Activated CD4-positive, alpha-beta memory T cell treated with anti-CD3 and anti-CD28 coated beads for 36 hours (primary cell): ENCODE measurements at regions of chr5 and their contacts with region 1.

Region 1: GRCh38 chr5:142012792-142013388 is at the start of gene GNPDA1:
- DNase-seq: peak; percentile 81
- H3K4me3 Mint-ChIP-seq: peak within 1 kb of the TSS; percentile 89
- H3K27ac Mint-ChIP-seq: peak within 1 kb of the TSS; percentile 98
- H3K4me1 Mint-ChIP-seq: peaks cover 69% of the 10 kb centered on the region
- H3K27me3 Mint-ChIP-seq: no peaks in the 10 kb centered on the region
- total RNA-seq, gene GNPDA1: 55.8 to 56.6 TPM

Region 2: GRCh38 chr5:141908796-141909195 is 104.1 kb before region 1 on chr5:
- CTCF ChIA-PET with region 1: no interaction called
- POLR2A ChIA-PET with region 1: no interaction called
- intact Hi-C with region 1: no loop called
- DNase-seq: no peak
- H3K4me3 Mint-ChIP-seq: no peak overlapping the region
- H3K27ac Mint-ChIP-seq: no peak overlapping the region
- H3K4me1 Mint-ChIP-seq: peaks cover 7% of the 10 kb centered on the region
- H3K27me3 Mint-ChIP-seq: peaks cover 10% of the 10 kb centered on the region

Region 3: DNA sequence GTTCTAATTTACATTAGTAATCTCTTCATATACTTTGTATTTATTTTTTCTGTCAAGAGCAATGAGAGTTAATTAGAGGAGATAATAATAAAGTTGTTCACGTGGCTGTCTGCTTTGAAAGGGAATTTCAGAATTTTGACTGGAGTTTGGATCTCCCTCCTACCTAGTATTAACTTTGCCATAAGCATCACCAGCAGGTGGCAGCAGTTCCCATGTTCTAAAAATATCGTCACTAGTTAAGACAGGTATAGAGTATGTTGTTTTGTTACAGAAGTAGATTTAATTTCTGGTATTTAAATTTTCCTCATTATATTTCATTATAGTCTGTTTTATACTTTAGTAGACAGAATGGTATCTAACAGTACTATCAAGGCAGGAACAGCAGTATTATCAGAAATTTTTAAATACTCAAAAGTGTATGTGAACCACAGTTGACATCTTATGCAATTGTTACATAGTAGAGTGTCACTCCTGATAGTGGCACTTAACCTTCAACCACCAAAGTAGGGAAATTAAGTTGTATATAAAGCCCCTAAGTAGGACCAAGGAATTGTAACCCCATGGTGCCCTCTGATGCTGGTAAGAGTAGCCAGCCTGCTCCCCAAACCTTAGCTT is 20.4 kb before region 1 on chr5:
- CTCF ChIA-PET with region 1: interaction called, 30 read pairs
- POLR2A ChIA-PET with region 1: no interaction called
- intact Hi-C with region 1: loop called (anchors 1 kb)
- DNase-seq: peak; percentile 84
- H3K4me3 Mint-ChIP-seq: no peak overlapping the region
- H3K27ac Mint-ChIP-seq: no peak overlapping the region
- H3K4me1 Mint-ChIP-seq: no peaks in the 10 kb centered on the region
- H3K27me3 Mint-ChIP-seq: no peaks in the 10 kb centered on the region

Region 4: DNA sequence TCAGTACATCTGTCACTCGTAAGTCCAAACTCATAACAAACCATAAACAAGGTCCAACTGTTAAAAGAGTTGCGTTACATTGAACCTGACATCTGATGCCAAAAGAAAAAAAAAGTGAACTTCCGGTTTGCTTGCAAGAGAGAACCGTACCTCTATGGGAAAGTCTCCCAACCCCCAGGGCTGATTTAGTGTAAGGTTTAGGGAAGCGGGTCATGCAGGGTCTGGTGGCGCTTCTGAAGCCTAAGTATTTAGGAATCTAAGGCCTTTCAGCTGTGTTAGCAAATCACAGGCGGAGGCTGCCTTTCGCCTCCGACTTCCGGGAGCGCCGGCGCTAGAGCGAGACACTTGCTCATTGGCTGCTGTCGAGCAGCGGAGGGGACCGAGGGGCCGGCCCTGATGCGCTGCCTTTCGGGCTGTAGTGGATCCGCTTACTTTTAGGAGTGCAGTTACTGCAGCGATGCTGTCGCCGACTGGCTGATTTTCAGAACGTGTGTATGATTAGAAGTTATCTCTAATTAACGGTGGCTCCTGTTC is 11.9 kb after region 1 on chr5:
- CTCF ChIA-PET with region 1: interaction called, 26 read pairs
- POLR2A ChIA-PET with region 1: interaction called, 10 read pairs
- intact Hi-C with region 1: loop called (anchors 1 kb)
- DNase-seq: peak; percentile 93
- H3K4me3 Mint-ChIP-seq: peak overlapping the region; percentile 88
- H3K27ac Mint-ChIP-seq: peak overlapping the region; percentile 99
- H3K4me1 Mint-ChIP-seq: peaks cover 17% of the 10 kb centered on the region
- H3K27me3 Mint-ChIP-seq: no peaks in the 10 kb centered on the region

Region 5: DNA sequence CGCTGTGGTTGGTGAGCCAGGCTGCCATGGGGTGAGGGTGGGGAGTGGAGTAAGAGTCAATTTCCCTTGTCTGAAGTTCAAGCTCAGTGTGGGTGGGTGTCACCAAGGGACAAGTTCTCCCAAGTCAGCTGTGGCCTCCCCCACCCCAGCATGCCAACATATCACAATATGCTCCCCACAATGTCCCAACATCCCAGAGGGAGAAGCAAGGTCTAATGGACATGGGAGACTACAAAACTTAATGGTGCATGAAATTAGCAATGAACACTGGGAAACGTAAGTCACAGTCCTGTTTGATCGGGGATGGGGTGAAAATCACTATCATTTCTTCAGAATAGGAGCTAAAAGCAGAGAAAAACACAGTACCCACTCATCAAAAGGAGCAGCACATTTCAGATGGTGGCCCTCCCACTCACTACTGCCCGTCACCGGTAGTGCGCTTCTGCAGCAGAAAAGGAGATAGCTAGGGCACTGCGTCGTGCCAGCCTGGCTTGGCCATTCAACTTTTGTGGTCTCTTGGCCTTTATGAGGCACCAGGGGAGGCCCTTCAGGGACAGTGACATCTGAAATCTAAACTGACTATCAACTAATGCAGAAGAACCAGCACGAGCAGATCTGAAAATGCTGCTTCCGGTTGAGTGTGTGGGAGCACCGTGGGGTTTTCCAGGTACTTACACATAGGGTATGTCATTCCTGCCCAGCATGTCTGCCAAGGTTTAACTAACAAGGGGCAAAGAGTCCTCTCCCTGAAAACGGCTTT is 75.2 kb after region 1 on chr5:
- CTCF ChIA-PET with region 1: interaction called, 45 read pairs
- POLR2A ChIA-PET with region 1: interaction called, 50 read pairs
- intact Hi-C with region 1: loop called (anchors 1 kb)
- DNase-seq: peak; percentile 88
- H3K4me3 Mint-ChIP-seq: peak overlapping the region; percentile 61
- H3K27ac Mint-ChIP-seq: peak overlapping the region; percentile 95
- H3K4me1 Mint-ChIP-seq: peaks cover 61% of the 10 kb centered on the region
- H3K27me3 Mint-ChIP-seq: no peaks in the 10 kb centered on the region

Region 6: GRCh38 chr5:142108432-142109330 is 95.8 kb after region 1 on chr5 and contains the start of gene NDFIP1:
- CTCF ChIA-PET with region 1: interaction called, 87 read pairs
- POLR2A ChIA-PET with region 1: interaction called, 103 read pairs
- intact Hi-C with region 1: loop called (anchors 1 kb)
- DNase-seq: peak; percentile 91
- H3K4me3 Mint-ChIP-seq: peak within 1 kb of the TSS; percentile 93
- H3K27ac Mint-ChIP-seq: peak within 1 kb of the TSS; percentile 97
- H3K4me1 Mint-ChIP-seq: peaks cover 71% of the 10 kb centered on the region
- H3K27me3 Mint-ChIP-seq: no peaks in the 10 kb centered on the region
- total RNA-seq, gene NDFIP1: 74.6 to 76.4 TPM

Region 7: DNA sequence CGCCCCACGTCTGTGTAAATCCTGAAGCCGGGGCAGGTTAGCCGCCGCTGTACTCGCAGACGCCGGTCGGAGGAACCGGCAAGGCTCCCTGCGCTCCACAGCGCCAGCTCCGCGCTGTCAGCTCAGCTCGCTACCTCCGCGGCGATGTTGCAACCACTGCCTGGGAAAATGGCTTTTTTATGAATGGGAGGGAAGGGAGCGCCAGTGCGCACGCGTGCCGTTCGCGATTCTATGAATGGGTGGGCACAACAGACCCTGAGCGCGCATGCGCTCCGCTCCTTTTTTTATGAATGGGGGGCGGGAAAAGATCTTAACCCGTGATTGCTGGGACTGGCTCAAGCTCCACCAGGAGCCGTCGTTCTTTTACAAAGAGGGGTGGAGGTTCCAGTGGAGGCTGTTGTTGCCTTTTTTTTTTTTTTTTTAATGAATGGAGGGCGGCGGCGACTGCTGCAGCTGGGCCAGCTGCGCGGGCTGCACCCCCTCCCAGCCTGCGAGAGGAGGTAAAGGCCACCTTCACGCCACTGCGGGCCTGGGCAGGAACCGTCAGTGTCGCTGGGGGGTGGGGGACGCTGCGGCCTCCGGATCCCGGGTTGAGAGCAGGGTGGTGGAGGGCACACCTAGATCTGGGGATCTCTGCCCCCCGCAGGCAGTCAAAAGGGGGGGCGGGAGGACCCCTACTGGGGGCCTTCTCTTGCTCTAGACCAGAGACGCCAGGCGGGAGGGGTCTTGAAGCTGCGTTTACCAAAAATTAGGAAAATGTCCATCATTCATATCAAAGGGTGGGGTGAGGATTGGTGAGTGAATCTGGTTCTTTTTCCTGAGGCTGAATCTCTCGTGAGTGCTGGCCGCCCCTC is 312.2 kb after region 1 on chr5 and contains the start of gene SPRY4:
- CTCF ChIA-PET with region 1: no interaction called
- POLR2A ChIA-PET with region 1: no interaction called
- intact Hi-C with region 1: loop called (anchors 10 kb)
- DNase-seq: peak; percentile 94
- H3K4me3 Mint-ChIP-seq: peak within 1 kb of the TSS; percentile 78
- H3K27ac Mint-ChIP-seq: no peak within 1 kb of the TSS
- H3K4me1 Mint-ChIP-seq: peaks cover 26% of the 10 kb centered on the region
- H3K27me3 Mint-ChIP-seq: peaks cover 48% of the 10 kb centered on the region
- total RNA-seq, gene SPRY4: 1.1 to 1.2 TPM